AG04450 (cell line): ENCODE measurements at regions of chr17 and their contacts with region 1.

Region 1: GRCh38 chr17:17792551-17793377 is 44.0 kb downstream of the SREBF1 start:
- DNase-seq: no peak
- H3K4me3 ChIP-seq: no peak overlapping the region
- H3K27ac ChIP-seq: no peak overlapping the region
- H3K27me3 ChIP-seq: no peaks in the 10 kb centered on the region
- CTCF ChIP-seq: no peak

Region 2: DNA sequence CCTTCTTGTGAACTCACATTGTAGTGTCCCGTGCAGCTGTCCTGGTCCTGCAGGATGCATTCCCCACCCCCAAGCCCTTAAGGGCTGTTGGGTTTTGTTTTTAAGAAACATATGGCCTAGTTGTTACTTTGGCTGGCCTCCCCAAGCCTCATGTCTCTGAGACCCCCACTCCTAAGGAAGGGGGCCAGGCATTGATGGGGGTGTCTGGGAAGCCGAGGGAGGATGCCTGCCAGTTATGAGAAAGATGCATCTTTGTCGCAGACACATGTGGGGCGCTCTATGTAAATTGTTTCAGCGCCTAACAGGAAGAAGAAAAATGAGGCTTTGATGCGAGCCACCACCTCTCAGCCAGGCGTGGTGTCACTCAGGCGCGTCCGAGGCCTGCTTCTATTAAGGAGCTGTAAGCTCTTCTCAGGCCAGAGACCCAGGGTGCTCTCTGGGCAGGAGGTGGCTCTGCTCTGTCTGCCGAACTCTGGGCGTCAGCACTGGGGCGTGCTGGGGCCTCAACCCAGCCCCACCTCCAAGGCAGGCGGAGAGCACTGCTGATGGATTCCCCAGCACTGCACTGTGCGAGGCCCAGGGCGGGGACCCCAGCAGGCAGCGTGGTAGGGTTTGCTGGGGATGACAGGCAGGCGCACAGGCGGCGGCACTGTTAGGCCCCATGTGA is 26.6 kb before region 1 on chr17:
- CTCF ChIA-PET with region 1: no interaction called
- POLR2A ChIA-PET with region 1: interaction called, 14 read pairs
- DNase-seq: no peak
- H3K4me3 ChIP-seq: no peak overlapping the region
- H3K27ac ChIP-seq: no peak overlapping the region
- H3K27me3 ChIP-seq: no peaks in the 10 kb centered on the region
- CTCF ChIP-seq: no peak